ENCODE measurements at regions of chr2 and their contacts with region 1.

Region 1: DNA sequence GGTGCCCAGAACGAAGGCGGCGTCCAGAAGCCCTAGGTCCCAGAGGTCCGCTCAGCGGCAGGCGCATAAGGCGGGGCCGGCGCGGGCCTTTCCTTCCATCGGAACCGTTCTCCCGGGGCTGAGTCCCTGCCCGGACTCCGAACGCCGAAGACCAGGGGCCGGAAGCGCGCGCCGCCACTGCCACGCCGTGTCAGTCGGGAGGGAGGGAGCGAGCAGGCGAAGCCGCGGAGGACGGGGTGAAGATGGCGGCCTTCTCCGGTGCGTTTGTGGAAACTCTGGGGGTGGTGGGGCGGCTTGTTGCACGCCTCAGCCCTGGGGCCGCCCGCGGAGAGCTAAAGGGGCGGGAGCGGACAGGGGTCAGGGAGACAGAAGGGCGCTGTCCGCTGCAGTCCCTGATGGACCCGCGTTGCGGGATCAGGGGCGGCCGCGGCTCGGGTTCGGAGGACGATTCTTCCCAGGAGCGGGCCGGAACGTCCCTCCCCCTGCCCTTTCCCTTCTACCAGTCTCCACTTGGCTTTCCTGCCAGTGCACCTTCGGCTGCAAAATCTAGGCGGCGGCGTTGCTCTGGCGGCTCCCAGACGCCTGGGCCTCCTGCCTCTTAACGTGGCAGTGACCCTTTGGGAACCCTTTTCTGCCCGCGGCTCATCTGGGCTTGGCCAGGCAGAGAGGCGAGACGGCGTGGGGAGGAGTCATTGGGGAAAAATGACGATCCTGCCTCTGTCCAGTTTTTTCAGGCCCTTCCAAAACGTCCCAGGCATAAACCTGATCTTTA is at the start of gene DDX1:
- DNase-seq: peak; percentile 80 to 91
- ATAC-seq: peak; percentile 96 to 97 (median 97)
- H3K4me3 ChIP-seq: peak within 1 kb of the TSS; percentile 97
- H3K4me3 Mint-ChIP-seq: peak within 1 kb of the TSS; percentile 95
- H3K27ac ChIP-seq: peak within 1 kb of the TSS; percentile 77
- H3K27ac Mint-ChIP-seq: peak within 1 kb of the TSS; percentile 88 to 96
- H3K4me1 ChIP-seq: peaks cover 13% of the 10 kb centered on the region
- H3K4me1 Mint-ChIP-seq: peaks cover 29 to 40% of the 10 kb centered on the region in 2 donors
- H3K27me3 ChIP-seq: no peaks in the 10 kb centered on the region
- H3K27me3 Mint-ChIP-seq: peaks cover 0 to 1% of the 10 kb centered on the region in 2 donors
- CTCF ChIP-seq: no peak
- total RNA-seq, gene DDX1: 28.5 to 43.4 (median 37.2) TPM

Region 2: DNA sequence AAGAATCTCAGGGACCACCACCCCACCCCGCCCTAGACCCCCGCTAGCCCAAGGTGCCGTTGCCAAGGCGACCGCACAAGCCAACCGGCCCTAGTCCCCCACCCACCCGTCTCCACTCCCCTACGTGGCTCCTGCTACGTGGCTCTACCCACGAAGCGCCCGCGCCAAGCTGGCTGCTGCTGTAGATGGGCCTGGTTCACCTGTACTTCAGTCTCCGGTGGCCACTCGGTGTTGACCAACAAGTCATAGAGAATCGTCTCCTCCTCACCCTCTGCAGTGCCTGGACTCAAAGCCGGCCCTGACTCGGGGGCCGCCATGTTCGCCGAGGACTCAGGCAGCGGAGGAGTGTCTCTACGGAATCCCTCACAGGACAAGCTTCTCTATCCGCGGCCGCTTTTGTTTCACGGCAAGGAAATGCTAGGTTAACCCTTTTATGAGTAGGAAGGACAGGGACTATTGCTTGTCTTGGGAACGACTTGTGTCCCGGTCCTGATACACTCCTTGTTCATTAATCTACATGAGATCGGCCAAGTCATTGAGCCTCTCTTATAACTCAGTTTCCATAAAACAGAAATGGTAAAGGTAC is 30.8 kb before region 1 on chr2 and contains the start of gene NBAS:
- intact Hi-C with region 1: loop called (anchors 1 kb)
- DNase-seq: peak; percentile 50 to 87
- ATAC-seq: peak; percentile 89 to 92 (median 90)
- H3K4me3 ChIP-seq: peak within 1 kb of the TSS; percentile 85
- H3K4me3 Mint-ChIP-seq: peak within 1 kb of the TSS; percentile 99
- H3K27ac ChIP-seq: peak within 1 kb of the TSS; percentile 62
- H3K27ac Mint-ChIP-seq: peak within 1 kb of the TSS; percentile 89 to 94
- H3K4me1 ChIP-seq: peaks cover 10% of the 10 kb centered on the region
- H3K4me1 Mint-ChIP-seq: peaks cover 37 to 40% of the 10 kb centered on the region in 2 donors
- H3K27me3 ChIP-seq: no peaks in the 10 kb centered on the region
- H3K27me3 Mint-ChIP-seq: peaks cover 18 to 29% of the 10 kb centered on the region in 2 donors
- CTCF ChIP-seq: no peak
- total RNA-seq, gene NBAS: 27.8 to 34.7 (median 29.2) TPM